Caco-2 (cell line): ENCODE measurements at regions of chr19 and their contacts with region 1.

Region 1: DNA sequence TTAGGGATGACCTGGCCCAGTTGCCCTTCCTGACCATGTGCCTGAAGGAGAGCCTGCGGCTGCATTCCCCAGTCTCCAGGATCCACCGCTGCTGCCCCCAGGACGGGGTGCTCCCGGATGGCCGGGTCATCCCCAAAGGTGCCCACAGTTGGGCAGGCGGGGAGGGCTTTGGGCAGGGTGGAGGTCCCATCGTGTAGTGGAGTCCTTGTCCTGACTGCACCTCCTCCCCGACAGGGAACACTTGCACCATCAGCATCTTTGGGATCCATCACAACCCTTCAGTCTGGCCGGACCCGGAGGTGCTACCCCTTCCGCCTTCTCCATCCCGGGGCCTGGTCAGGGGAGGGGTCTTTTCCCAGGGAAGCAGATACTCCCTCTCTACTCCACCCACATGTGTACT is 31.7 kb upstream of the CYP4F8 start:
- DNase-seq: no peak
- H3K4me3 ChIP-seq: no peak overlapping the region
- H3K4me3 Mint-ChIP-seq: no peak overlapping the region
- H3K27ac Mint-ChIP-seq: no peak overlapping the region
- H3K4me1 ChIP-seq: no peaks in the 10 kb centered on the region
- H3K4me1 Mint-ChIP-seq: peaks cover 6% of the 10 kb centered on the region
- H3K27me3 ChIP-seq: peaks cover 2% of the 10 kb centered on the region
- H3K27me3 Mint-ChIP-seq: peaks cover 17% of the 10 kb centered on the region
- CTCF ChIP-seq: no peak

Region 2: DNA sequence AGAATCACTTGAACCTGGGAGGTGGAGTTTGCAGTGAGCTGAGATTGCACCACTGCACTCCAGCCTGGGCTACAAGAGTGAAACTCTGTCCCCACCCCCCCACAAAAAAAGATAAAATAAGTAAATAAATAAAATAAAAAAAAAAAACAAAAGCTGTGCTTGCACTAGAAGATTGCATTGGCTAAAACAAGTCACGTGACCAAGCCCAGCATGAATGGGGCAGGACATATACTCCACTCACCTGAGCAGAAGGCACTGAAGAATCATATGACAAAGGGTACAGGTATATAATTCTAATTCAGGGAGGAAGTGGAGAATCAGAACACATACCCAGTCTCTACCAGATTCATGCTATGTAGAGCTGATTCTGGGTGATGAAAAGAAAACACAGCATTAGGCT is 38.4 kb before region 1 on chr19:
- CTCF ChIA-PET with region 1: no interaction called
- POLR2A ChIA-PET with region 1: interaction called, 13 read pairs
- intact Hi-C with region 1: no loop called
- DNase-seq: no peak
- H3K4me3 ChIP-seq: no peak overlapping the region
- H3K4me3 Mint-ChIP-seq: no peak overlapping the region
- H3K27ac Mint-ChIP-seq: no peak overlapping the region
- H3K4me1 ChIP-seq: no peaks in the 10 kb centered on the region
- H3K4me1 Mint-ChIP-seq: no peaks in the 10 kb centered on the region
- H3K27me3 ChIP-seq: no peaks in the 10 kb centered on the region
- H3K27me3 Mint-ChIP-seq: peaks cover 7% of the 10 kb centered on the region
- CTCF ChIP-seq: no peak

Region 3: GRCh38 chr19:15555759-15556633 is 27.4 kb before region 1 on chr19:
- CTCF ChIA-PET with region 1: no interaction called
- POLR2A ChIA-PET with region 1: no interaction called
- intact Hi-C with region 1: no loop called
- DNase-seq: peak; percentile 96
- H3K4me3 ChIP-seq: peak overlapping the region; percentile 39
- H3K4me3 Mint-ChIP-seq: peak overlapping the region; percentile 85
- H3K27ac Mint-ChIP-seq: peak overlapping the region; percentile 84
- H3K4me1 ChIP-seq: no peaks in the 10 kb centered on the region; the same call in 1 of the 2 replicates
- H3K4me1 Mint-ChIP-seq: peaks cover 14% of the 10 kb centered on the region
- H3K27me3 ChIP-seq: no peaks in the 10 kb centered on the region
- H3K27me3 Mint-ChIP-seq: no peaks in the 10 kb centered on the region
- CTCF ChIP-seq: peak; percentile 68 to 79